Heart right ventricle (tissue), 16 donors: ENCODE measurements at regions of chr3 and their contacts with region 1.

Region 1: DNA sequence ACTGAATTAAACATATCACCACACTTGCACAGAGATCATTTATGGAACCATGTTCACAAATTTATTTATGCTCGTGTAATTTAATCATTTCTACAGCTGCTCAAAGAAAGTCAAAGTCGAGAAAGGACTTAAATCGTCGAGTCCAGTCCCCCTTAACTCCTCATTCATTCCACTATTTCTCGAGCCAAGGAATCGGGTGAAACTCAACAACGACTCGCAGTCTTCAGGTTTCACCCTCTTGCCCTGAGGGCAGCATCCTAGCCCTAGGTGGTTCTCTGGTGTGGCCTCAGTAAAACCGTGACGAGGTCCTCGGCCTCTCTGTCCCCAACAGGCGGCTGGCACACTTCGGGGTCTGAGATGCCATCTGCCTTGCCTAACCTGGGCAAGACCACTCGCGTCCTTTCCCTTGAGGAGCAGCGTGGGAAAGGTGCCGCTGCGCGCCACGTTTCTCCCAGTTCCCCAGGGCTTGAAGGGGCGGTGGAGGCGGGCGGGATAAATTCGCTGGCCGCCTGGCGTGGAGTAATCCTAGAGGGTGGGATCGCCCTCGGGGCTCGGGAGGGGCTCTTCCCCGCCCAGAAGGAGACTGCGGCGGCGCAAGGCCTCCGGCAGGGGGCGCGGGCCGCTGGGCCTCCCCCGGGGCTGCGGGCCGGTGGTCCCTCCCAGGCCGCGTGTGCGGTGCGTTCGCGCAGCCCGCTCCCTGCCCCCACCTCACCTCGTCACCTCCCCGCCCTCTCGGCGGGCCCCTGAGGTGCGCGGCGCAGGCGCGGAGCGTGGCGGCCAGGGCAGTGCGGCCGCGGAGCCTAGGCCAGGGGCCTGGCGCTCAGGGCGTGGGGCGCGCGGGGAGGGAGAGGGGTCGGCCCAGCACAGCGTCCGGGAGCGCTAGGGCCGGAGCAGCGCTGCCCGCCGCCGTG is at the start of gene ZNF639:
- DNase-seq: peak; percentile 80 to 88
- ATAC-seq: peak; percentile 87 to 95 (median 92)
- H3K4me3 ChIP-seq: peak within 1 kb of the TSS; percentile 82 to 99 (median 90)
- H3K27ac ChIP-seq: peak within 1 kb of the TSS; percentile 93 to 99 (median 97)
- H3K4me1 ChIP-seq: peaks cover 3 to 54% (median 31%) of the 10 kb centered on the region in 9 donors
- H3K27me3 ChIP-seq: no peaks in the 10 kb centered on the region
- CTCF ChIP-seq: peak; percentile 82 to 95 (median 86)
- total RNA-seq, gene ZNF639: 25.8 to 41.0 (median 30.6) TPM

Region 2: DNA sequence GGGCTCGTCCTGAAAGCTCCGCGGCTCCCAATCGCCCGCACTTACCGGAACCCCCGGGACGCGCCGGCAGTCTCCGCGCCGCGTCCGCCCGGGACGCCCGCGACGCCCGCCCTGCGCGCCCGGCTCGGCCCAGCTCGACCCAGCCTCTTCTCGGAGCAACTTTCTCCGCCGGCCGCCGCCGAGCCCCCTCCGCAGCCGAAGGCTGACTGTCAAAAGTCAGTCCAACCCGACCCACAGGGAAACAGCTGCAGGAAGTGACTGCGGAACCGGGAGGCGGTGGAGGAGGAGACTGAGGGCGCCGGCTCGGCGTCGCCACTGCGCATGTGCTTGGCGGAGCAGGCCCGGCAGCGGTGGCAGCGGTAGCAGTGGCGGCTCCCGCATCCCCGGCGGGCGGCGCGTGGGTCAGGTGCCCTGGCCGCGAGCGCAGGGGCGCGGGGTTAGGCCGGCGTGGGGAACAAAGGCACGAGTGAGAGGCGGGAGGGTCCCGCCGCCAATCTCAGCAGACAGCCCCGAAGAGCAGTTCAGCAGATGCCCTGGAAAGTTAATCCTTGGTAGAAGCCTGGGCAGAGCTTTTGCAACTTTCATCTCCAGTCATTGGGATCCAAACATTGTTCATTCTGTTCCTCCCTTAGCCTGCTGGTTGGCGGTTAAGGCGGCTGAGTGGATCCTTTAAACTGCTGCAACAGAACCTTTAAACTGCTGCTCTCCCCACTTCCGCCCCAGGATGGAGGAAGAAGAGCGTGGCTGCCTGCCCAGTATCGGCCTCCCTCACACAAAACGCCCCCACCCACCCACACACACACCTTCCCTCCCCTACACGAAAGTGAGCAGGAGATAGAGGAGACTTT is 250.8 kb before region 1 on chr3 and contains the start of gene ZMAT3:
- intact Hi-C with region 1: loop called in 1 of 10 experiments (anchors 5 kb)
- DNase-seq: peak; percentile 90 to 91
- ATAC-seq: peak; percentile 97 to 99 (median 98)
- H3K4me3 ChIP-seq: peak within 1 kb of the TSS; percentile 64 to 92 (median 77)
- H3K27ac ChIP-seq: peak within 1 kb of the TSS; percentile 53 to 97 (median 90)
- H3K4me1 ChIP-seq: peaks cover 0 to 44% (median 25%) of the 10 kb centered on the region in 9 donors
- H3K27me3 ChIP-seq: no peaks in the 10 kb centered on the region
- CTCF ChIP-seq: no peak
- total RNA-seq, gene ZMAT3: 10.1 to 18.2 (median 13.1) TPM

Region 3: DNA sequence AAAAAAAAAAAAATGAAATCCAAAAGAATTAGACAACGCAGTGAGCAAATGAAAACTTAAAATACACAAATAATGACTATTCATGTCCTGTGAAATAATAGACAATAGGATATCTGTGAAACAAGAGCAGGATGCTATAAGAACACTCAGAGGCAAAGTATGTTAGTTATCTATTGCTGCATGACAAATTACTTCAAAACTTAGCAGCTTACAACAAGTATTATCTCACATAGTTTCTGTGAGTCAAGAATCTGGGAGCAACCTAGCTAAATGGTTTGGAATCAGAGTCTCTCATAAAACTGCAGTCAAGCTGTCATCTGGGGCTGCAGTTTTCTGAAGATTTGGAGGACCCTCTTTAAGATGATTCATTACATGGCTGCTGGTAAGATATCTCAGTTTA is 214.5 kb before region 1 on chr3:
- intact Hi-C with region 1: loop called in 6 of 10 experiments (anchors 2 to 10 kb)
- DNase-seq: no peak
- ATAC-seq: no peak
- H3K4me3 ChIP-seq: no peak overlapping the region
- H3K27ac ChIP-seq: no peak overlapping the region
- H3K4me1 ChIP-seq: no peaks in the 10 kb centered on the region
- H3K27me3 ChIP-seq: peaks cover 0 to 4% (median 0%) of the 10 kb centered on the region in 7 donors
- CTCF ChIP-seq: no peak

Region 4: DNA sequence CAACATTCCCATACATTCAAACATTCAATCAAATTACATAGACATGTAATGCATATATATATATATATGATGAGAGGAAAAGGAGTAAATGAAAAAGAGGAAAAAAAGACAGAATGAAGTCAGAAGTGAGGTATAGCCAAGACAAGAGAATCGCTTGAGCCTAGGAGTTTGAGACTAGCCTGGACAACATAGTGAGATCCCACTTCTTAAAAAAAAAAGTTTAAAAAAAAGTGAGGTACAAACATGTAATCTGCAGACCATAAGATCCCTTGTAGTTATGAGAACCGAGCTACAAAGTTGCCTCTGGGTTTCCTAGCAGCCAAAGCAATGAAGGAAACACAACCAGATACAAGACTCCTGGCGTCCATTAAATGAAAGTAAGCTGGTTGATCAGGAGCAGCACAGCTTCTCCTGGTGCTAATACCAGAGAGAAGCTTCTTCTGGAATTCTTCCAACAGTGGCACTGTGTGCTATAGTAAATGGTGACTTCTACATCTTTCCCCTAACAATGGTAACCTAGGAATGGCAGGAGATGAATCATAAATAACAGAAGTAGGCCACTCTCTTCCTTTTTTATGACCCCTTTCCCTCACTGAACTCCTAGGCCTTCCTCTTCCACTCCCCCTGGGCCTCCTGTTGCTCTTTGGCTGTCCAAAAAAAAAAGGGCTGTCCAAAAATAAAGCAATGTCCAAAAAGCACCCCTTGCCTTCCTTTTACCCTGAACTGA is 75.1 kb before region 1 on chr3:
- intact Hi-C with region 1: no loop called
- DNase-seq: no peak
- ATAC-seq: no peak
- H3K4me3 ChIP-seq: no peak overlapping the region
- H3K27ac ChIP-seq: no peak overlapping the region
- H3K4me1 ChIP-seq: no peaks in the 10 kb centered on the region
- H3K27me3 ChIP-seq: no peaks in the 10 kb centered on the region
- CTCF ChIP-seq: no peak

Region 5: GRCh38 chr3:179347345-179348194 is 25.0 kb after region 1 on chr3 and contains the start of gene MFN1:
- intact Hi-C with region 1: loop called in 3 of 10 experiments (anchors 1 to 2 kb)
- DNase-seq: peak; percentile 91 to 96
- ATAC-seq: peak; percentile 98 to 100 (median 99)
- H3K4me3 ChIP-seq: peak within 1 kb of the TSS; percentile 68 to 84 (median 76)
- H3K27ac ChIP-seq: peak within 1 kb of the TSS; percentile 72 to 92 (median 88)
- H3K4me1 ChIP-seq: peaks cover 0 to 30% (median 11%) of the 10 kb centered on the region in 9 donors
- H3K27me3 ChIP-seq: no peaks in the 10 kb centered on the region
- CTCF ChIP-seq: no peak
- total RNA-seq, gene MFN1: 52.0 to 82.1 (median 67.9) TPM

Region 6: DNA sequence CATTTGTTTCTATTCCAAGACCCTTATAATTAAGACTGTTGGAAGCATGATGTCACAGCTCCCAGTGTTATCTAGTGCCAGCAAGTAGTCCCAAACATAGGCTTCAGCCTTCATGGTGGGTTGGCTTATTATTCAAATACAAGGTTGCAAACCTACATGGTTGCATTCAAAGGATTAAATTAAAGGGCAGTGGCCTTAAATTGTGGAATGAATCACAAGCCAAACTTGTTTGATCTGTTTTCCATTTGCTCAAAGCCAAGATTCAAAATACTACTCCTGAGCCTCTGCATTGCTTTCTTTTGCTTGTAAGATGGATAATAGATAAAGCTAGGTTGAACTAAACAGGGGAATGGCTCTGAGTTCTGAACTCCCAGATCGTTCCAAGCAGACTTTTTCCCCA is 181.1 kb after region 1 on chr3:
- intact Hi-C with region 1: no loop called
- DNase-seq: no peak
- ATAC-seq: no peak
- H3K4me3 ChIP-seq: no peak overlapping the region
- H3K27ac ChIP-seq: no peak overlapping the region
- H3K4me1 ChIP-seq: no peaks in the 10 kb centered on the region
- H3K27me3 ChIP-seq: peaks cover 0 to 4% (median 0%) of the 10 kb centered on the region in 7 donors
- CTCF ChIP-seq: no peak